ENCODE measurements at regions of chr7 and their contacts with region 1.

Region 1: GRCh38 chr7:150331111-150331510 is 7.8 kb upstream of the ACTR3C start:
- DNase-seq: no peak
- H3K4me3 ChIP-seq: no peak overlapping the region
- H3K27ac ChIP-seq: no peak overlapping the region
- H3K4me1 ChIP-seq: peaks cover 11% of the 10 kb centered on the region
- H3K27me3 ChIP-seq: no peaks in the 10 kb centered on the region
- CTCF ChIP-seq: no peak
- POLR2A ChIP-seq: no peak

Region 2: DNA sequence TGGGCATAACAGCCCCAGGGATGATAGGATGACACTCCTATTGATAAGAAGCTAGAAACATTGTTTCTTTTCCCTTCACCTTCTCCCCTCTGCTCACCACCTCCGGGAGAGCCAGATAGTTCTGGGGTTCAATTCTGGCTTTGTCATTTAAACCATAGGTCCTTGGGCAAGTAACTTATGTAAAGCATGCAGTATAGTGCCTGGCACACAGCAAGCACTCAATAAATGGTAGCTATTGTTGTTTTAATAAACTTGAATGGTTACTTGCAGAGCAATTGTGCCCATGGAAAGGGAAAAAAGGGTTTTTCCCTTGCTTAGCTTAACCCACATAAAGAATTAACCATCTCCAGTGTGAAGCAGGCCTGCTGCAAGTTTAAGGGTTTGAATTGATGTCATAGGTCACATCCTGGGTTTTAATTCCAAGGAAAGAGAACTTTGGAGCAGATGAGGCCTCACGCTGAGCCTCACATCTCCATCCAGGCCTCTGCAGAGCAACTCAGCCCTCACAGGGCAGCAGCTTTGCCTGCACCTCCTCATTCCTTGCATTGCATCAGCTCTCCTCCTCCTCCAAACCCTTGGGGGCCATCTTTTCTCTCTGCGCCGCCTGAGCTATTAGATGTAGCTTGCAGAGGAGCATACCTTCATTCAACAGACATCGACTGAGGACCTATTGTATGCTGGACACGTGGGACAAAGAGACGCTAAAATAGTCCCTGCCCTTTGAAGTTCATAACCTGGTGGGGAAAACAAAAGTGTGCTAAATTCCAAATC is 70.9 kb after region 1 on chr7:
- intact Hi-C with region 1: no loop called
- DNase-seq: no peak
- H3K4me3 ChIP-seq: no peak overlapping the region
- H3K27ac ChIP-seq: no peak overlapping the region
- H3K4me1 ChIP-seq: peaks cover 25% of the 10 kb centered on the region
- H3K27me3 ChIP-seq: no peaks in the 10 kb centered on the region
- CTCF ChIP-seq: no peak
- POLR2A ChIP-seq: no peak

Region 3: GRCh38 chr7:150412518-150413488 is 81.7 kb after region 1 on chr7:
- intact Hi-C with region 1: loop called (anchors 1 kb)
- DNase-seq: no peak
- H3K4me3 ChIP-seq: no peak overlapping the region
- H3K27ac ChIP-seq: no peak overlapping the region
- H3K4me1 ChIP-seq: no peaks in the 10 kb centered on the region
- H3K27me3 ChIP-seq: no peaks in the 10 kb centered on the region
- CTCF ChIP-seq: no peak
- POLR2A ChIP-seq: no peak